GM12878 (cell line): ENCODE measurements at regions of chr7 and their contacts with region 1.

Region 1: DNA sequence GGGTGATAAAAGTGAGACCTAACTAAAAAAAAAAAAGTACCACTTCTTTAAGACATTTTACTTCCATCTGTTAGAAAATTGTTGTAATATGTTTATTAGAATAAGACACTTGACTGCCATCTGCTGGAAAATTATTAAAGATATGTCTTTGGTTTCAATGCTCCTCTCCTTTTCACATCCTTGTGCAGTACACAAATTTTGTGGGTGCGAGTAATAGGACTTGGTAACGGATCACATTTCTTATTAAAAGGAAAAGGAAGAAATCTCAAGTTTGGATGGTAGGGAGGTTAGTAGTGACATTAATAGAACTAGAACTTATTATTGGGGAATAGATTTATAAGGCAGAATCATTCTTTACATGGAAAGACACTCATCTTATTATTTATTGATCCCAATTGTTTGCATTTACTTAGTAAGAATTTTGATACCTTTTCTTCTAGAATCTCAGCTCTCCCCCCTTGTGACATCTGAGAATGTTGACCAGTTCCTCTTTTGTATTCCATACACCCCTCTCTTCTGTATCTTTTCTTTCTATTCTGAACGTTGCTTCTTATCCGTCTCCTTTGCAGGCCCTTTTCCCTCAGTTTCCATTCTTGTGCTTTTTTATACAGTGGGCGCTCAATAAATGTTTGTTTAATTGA is 43.1 kb upstream of the RPA3 start:
- DNase-seq: no peak
- ATAC-seq: peak; percentile 70
- H3K4me3 ChIP-seq: peak overlapping the region; percentile 56
- H3K27ac ChIP-seq: peak overlapping the region; percentile 55
- H3K4me1 ChIP-seq: peaks cover 6% of the 10 kb centered on the region
- H3K27me3 ChIP-seq: no peaks in the 10 kb centered on the region
- CTCF ChIP-seq: peak in 2 of 3 experiments; percentile 32 to 50; a peak in 4 of 6 replicates
- EP300 ChIP-seq: no peak
- POLR2A ChIP-seq: no peak
- RAD21 ChIP-seq: peak; percentile 61

Region 2: DNA sequence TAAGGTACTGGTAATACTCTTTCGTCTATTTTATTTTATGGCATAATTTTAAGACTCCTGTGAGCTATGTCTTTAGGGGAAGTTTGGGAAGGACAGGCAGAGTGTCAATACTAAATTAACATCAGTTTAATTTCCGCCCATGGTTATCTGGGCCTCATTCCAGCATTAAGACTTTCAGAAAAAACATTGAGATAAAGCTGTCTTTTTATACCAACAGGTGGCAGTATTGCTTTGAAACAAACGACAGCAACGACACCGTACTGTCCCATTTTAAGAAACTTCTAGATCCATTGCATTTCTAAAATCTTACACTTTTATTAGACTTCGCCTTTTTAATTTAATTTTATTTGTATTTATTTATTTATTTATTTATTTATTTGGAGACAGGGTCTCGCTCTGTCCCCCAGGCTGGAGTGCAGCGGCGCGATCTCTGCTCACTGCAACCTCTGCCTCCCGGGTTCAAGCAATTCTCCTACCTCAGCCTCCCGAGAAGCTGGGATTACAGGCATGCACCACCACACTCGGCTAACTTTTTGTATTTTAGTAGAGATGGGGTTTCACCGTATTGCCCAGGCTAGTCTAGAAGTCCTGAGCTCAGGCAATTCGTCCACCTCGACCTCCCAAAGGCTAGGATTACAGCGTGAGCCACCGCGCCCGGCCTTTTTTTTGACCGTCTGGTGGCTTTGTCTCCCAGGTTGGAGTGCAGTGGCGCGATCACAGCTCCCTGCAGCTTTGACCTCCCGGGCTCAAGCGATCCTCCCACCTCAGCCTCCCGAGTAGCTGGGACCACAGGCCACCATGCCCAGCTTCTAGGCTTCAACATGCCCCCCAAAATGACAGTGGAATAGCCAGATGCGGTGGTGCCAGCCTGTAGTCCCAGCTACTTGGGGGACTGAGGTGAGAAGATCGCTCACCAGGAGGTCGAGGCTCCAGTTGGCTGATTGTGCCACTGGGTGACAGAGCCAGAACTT is 657.8 kb before region 1 on chr7:
- CTCF ChIA-PET with region 1: interaction called, 4 read pairs
- POLR2A ChIA-PET with region 1: no interaction called
- RAD21 ChIA-PET with region 1: interaction called, 3 read pairs
- SMC1A ChIA-PET with region 1: interaction called, 3 read pairs
- in situ Hi-C with region 1: no loop called
- intact Hi-C with region 1: loop called (anchors 10 kb)
- DNase-seq: peak; percentile 7
- ATAC-seq: peak; percentile 88
- H3K4me3 ChIP-seq: no peak overlapping the region
- H3K27ac ChIP-seq: no peak overlapping the region
- H3K4me1 ChIP-seq: no peaks in the 10 kb centered on the region
- H3K27me3 ChIP-seq: no peaks in the 10 kb centered on the region
- CTCF ChIP-seq: peak; percentile 49 to 69 (median 56); a peak in 5 of 6 replicates
- EP300 ChIP-seq: no peak
- POLR2A ChIP-seq: no peak
- RAD21 ChIP-seq: peak; percentile 81

Region 3: DNA sequence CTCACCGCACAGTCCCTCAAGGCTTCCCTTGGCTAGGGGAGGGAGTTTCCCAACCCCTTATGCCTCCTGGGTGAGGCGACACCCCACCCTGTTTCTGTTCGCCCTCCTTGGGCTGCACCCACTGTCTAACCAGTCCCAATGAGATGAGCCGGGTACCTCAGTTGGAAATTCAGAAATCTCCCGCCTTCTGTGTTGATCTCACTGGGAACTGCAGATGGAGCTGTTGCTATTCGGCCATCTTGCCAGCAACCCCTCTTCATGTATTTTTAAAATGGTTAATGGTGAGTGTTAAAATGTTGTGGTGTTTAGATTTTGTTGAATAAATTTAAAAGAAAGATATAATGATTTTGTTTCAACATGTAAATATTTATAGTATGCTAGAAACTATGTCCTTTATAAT is 98.9 kb before region 1 on chr7:
- CTCF ChIA-PET with region 1: interaction called, 11 read pairs
- POLR2A ChIA-PET with region 1: no interaction called
- RAD21 ChIA-PET with region 1: no interaction called
- SMC1A ChIA-PET with region 1: interaction called, 3 read pairs
- in situ Hi-C with region 1: no loop called
- intact Hi-C with region 1: no loop called
- DNase-seq: no peak
- ATAC-seq: no peak
- H3K4me3 ChIP-seq: no peak overlapping the region
- H3K27ac ChIP-seq: no peak overlapping the region
- H3K4me1 ChIP-seq: no peaks in the 10 kb centered on the region
- H3K27me3 ChIP-seq: no peaks in the 10 kb centered on the region
- CTCF ChIP-seq: peak; percentile 3 to 21 (median 18); a peak in 2 of 6 replicates
- EP300 ChIP-seq: no peak
- POLR2A ChIP-seq: no peak
- RAD21 ChIP-seq: peak; percentile 39

Region 4: GRCh38 chr7:7739204-7740036 is 22.0 kb before region 1 on chr7:
- CTCF ChIA-PET with region 1: interaction called, 12 read pairs
- POLR2A ChIA-PET with region 1: interaction called, 4 read pairs
- RAD21 ChIA-PET with region 1: interaction called, 16 read pairs
- SMC1A ChIA-PET with region 1: interaction called, 28 read pairs
- in situ Hi-C with region 1: no loop called
- intact Hi-C with region 1: no loop called
- DNase-seq: no peak
- ATAC-seq: peak; percentile 88
- H3K4me3 ChIP-seq: no peak overlapping the region
- H3K27ac ChIP-seq: no peak overlapping the region
- H3K4me1 ChIP-seq: peaks cover 5% of the 10 kb centered on the region; the same call in 1 of the 2 replicates
- H3K27me3 ChIP-seq: no peaks in the 10 kb centered on the region
- CTCF ChIP-seq: no peak
- EP300 ChIP-seq: peak; percentile 62 to 98
- POLR2A ChIP-seq: no peak
- RAD21 ChIP-seq: no peak

Region 5: GRCh38 chr7:7789551-7789988 is 28.1 kb after region 1 on chr7:
- CTCF ChIA-PET with region 1: interaction called, 5 read pairs
- POLR2A ChIA-PET with region 1: no interaction called
- RAD21 ChIA-PET with region 1: interaction called, 11 read pairs
- SMC1A ChIA-PET with region 1: interaction called, 11 read pairs
- in situ Hi-C with region 1: no loop called
- intact Hi-C with region 1: no loop called
- DNase-seq: peak; percentile 73
- ATAC-seq: peak; percentile 99
- H3K4me3 ChIP-seq: no peak overlapping the region
- H3K27ac ChIP-seq: no peak overlapping the region; the same call in 1 of the 2 replicates
- H3K4me1 ChIP-seq: peaks cover 11% of the 10 kb centered on the region
- H3K27me3 ChIP-seq: no peaks in the 10 kb centered on the region
- CTCF ChIP-seq: no peak
- EP300 ChIP-seq: peak; percentile 28 to 84; a peak in 2 of 4 replicates
- POLR2A ChIP-seq: no peak
- RAD21 ChIP-seq: no peak

Region 6: GRCh38 chr7:7902845-7903244 is 141.4 kb after region 1 on chr7:
- CTCF ChIA-PET with region 1: no interaction called
- POLR2A ChIA-PET with region 1: no interaction called
- RAD21 ChIA-PET with region 1: no interaction called
- SMC1A ChIA-PET with region 1: no interaction called
- in situ Hi-C with region 1: no loop called
- intact Hi-C with region 1: no loop called
- DNase-seq: no peak
- ATAC-seq: no peak
- H3K4me3 ChIP-seq: no peak overlapping the region
- H3K27ac ChIP-seq: no peak overlapping the region
- H3K4me1 ChIP-seq: no peaks in the 10 kb centered on the region
- H3K27me3 ChIP-seq: no peaks in the 10 kb centered on the region
- CTCF ChIP-seq: no peak
- EP300 ChIP-seq: no peak
- POLR2A ChIP-seq: no peak
- RAD21 ChIP-seq: no peak

Region 7: DNA sequence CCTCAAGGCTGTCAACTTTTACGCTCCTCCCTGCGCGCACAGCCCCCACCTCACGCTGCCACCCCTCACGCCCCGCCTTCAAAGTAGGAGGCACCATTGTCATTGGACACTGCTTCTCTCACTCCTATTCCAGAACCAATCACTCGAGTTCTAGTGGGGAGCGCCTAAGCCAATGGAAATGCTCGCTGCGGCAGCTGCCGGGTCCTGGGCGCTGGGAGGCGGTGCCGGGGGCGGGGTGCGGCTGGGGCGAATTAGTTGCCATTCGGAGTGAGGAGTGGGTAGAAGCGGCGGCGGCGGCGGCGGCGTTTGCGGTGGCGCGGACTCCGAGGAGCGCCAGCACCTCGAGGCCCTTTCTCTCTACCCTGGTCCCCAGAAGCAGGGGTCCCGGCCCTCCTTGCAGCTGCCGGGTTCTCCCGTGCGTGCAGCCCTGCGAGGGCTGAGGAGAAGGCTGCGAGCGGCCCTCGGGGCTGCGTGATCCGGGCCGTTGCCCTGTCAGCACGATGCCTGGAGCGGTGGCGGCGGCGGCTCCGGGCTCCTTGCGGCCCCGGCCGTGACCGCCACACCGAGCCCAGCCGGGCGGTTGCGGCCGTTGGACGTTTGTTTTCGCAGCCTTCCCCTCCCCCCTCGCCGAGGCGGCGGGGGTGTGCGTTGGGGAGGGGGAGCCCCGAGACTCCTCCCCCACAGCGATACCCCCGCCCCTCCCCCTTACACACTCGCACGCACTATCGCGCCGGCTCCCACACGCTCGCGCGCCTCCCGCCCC is 207.3 kb after region 1 on chr7 and contains the start of gene GLCCI1:
- CTCF ChIA-PET with region 1: interaction called, 10 read pairs
- POLR2A ChIA-PET with region 1: interaction called, 3 read pairs
- RAD21 ChIA-PET with region 1: interaction called, 20 read pairs
- SMC1A ChIA-PET with region 1: interaction called, 32 read pairs
- in situ Hi-C with region 1: no loop called
- intact Hi-C with region 1: loop called (anchors 2 kb)
- DNase-seq: peak; percentile 98
- ATAC-seq: peak; percentile 88
- H3K4me3 ChIP-seq: peak within 1 kb of the TSS; percentile 82
- H3K27ac ChIP-seq: peak within 1 kb of the TSS; percentile 95
- H3K4me1 ChIP-seq: peaks cover 31% of the 10 kb centered on the region
- H3K27me3 ChIP-seq: no peaks in the 10 kb centered on the region
- CTCF ChIP-seq: no peak
- EP300 ChIP-seq: peak; percentile 21 to 61; a peak in 1 of 4 replicates
- POLR2A ChIP-seq: peak; percentile 74
- RAD21 ChIP-seq: no peak
- polyA plus RNA-seq, gene GLCCI1: 16.2 to 17.9 TPM

Region 8: GRCh38 chr7:8015100-8015748 is 253.8 kb after region 1 on chr7:
- CTCF ChIA-PET with region 1: no interaction called
- POLR2A ChIA-PET with region 1: no interaction called
- RAD21 ChIA-PET with region 1: no interaction called
- SMC1A ChIA-PET with region 1: no interaction called
- in situ Hi-C with region 1: no loop called
- intact Hi-C with region 1: no loop called
- DNase-seq: no peak
- ATAC-seq: no peak
- H3K4me3 ChIP-seq: no peak overlapping the region
- H3K27ac ChIP-seq: no peak overlapping the region
- H3K4me1 ChIP-seq: no peaks in the 10 kb centered on the region
- H3K27me3 ChIP-seq: no peaks in the 10 kb centered on the region
- CTCF ChIP-seq: no peak
- EP300 ChIP-seq: no peak
- POLR2A ChIP-seq: no peak
- RAD21 ChIP-seq: no peak

Region 9: DNA sequence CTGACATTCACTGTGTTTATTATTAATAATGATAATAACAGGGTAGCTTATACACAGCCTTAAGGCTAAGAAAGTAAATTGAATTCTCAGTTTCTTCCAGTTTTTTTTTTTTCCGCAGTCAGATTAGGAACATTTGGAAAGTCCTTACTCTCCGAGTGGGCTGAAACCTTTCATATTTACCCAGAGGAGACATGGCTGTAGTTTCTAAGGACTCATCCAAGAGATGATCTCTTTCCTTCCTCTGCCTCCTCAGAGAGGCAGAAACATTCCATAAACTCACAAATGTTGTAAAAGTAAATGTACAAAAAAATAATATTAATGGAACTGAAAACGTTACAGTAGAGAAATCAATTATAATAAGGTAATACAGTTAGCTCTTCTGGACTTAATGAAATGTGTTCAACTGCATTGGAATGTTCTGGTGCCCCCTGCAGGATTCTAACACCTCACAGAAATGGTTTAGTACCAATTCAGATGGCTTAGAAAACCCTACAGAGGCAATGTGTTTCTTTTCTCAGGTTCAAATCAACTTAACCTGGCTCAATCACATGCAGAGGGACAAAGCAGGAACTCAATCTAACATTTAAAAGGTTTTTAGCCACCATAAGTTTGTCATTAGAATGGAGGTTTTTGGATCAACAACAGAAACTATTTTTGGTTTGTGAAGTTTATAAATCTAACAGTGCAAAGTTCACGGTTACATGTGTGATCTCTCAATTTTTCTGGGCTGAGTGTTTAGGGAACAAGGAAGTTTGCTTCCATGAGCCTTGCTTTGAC is 428.8 kb after region 1 on chr7:
- CTCF ChIA-PET with region 1: interaction called, 16 read pairs
- POLR2A ChIA-PET with region 1: no interaction called
- RAD21 ChIA-PET with region 1: interaction called, 14 read pairs
- SMC1A ChIA-PET with region 1: interaction called, 10 read pairs
- in situ Hi-C with region 1: no loop called
- intact Hi-C with region 1: loop called (anchors 2 kb)
- DNase-seq: peak; percentile 77
- ATAC-seq: peak; percentile 97
- H3K4me3 ChIP-seq: no peak overlapping the region
- H3K27ac ChIP-seq: peak overlapping the region; percentile 44; the same call in 1 of the 2 replicates
- H3K4me1 ChIP-seq: no peaks in the 10 kb centered on the region
- H3K27me3 ChIP-seq: no peaks in the 10 kb centered on the region
- CTCF ChIP-seq: peak; percentile 66 to 82 (median 81); a peak in 5 of 6 replicates
- EP300 ChIP-seq: no peak
- POLR2A ChIP-seq: no peak
- RAD21 ChIP-seq: peak; percentile 97